ENCODE measurements at regions of chr9 and their contacts with region 1.

Region 1: DNA sequence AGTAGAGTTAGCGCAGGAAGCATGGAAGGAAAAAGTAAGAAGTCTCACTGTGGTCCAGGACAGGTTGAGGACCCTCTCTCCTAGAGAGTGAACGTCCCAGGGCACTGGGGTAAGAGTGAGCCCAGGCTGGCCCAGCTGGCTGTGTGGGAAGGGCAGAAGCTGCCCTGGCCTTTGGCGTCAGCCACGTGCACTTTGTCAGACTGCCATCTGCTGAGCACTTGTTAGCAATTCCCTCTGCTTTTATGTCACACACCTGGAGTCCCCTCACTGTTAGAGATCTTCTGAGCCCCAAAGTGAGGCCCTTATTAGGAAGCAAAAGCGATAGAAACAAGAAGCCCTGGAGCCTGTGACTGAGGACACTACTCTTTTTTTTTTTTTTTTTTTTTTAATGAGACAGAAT is 79.1 kb downstream of the UGCG start:
- DNase-seq: no peak
- H3K4me3 ChIP-seq: no peak overlapping the region
- H3K27ac ChIP-seq: no peak overlapping the region
- H3K4me1 ChIP-seq: peaks cover 17% of the 10 kb centered on the region
- H3K27me3 ChIP-seq: no peaks in the 10 kb centered on the region
- CTCF ChIP-seq: peak in 1 of 2 donors; percentile 40

Region 2: GRCh38 chr9:111857609-111858211 is 118.0 kb before region 1 on chr9:
- CTCF ChIA-PET with region 1: no interaction called
- dilution Hi-C with region 1: no loop called
- in situ Hi-C with region 1: no loop called
- intact Hi-C with region 1: no loop called
- DNase-seq: peak; percentile 85
- H3K4me3 ChIP-seq: no peak overlapping the region
- H3K27ac ChIP-seq: no peak overlapping the region
- H3K4me1 ChIP-seq: peaks cover 18% of the 10 kb centered on the region
- H3K27me3 ChIP-seq: no peaks in the 10 kb centered on the region
- CTCF ChIP-seq: no peak

Region 3: DNA sequence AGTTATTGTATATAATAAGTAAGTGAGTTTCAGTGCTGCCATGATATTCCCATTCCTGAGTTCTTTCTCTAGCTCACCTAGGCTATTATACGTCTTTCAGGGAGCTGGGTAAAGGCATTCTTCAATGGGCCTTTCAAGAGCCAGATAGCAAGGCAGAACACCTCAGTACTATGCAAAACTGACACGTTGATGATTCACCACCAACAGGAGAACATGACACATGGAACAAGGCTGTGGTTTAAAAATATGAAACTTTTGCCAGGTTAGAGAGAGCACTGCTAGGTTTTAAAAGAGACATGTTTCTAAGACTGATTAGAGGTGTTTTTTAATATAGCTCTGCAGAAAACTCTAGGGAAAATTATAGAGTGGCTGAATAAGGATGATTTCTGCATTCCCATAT is 16.8 kb after region 1 on chr9:
- CTCF ChIA-PET with region 1: no interaction called
- dilution Hi-C with region 1: no loop called
- in situ Hi-C with region 1: no loop called
- intact Hi-C with region 1: loop called (anchors 2 kb)
- DNase-seq: peak; percentile 93
- H3K4me3 ChIP-seq: no peak overlapping the region
- H3K27ac ChIP-seq: peak overlapping the region; percentile 32
- H3K4me1 ChIP-seq: peaks cover 10% of the 10 kb centered on the region
- H3K27me3 ChIP-seq: no peaks in the 10 kb centered on the region
- CTCF ChIP-seq: no peak